B cell (primary cell): ENCODE measurements at regions of chr14 and their contacts with region 1.

Region 1: GRCh38 chr14:22448905-22449599 is 140.0 kb downstream of the DAD1 start:
- DNase-seq: no peak
- ATAC-seq: peak; percentile 16
- H3K4me3 ChIP-seq: no peak overlapping the region
- H3K4me3 Mint-ChIP-seq: no peak overlapping the region
- H3K27ac ChIP-seq: peak overlapping the region in 1 of 2 donors; percentile 47
- H3K27ac Mint-ChIP-seq: peak overlapping the region; percentile 88
- H3K4me1 ChIP-seq: peaks cover 15 to 17% of the 10 kb centered on the region in 2 donors
- H3K4me1 Mint-ChIP-seq: peaks cover 23% of the 10 kb centered on the region
- H3K27me3 ChIP-seq: no peaks in the 10 kb centered on the region
- H3K27me3 Mint-ChIP-seq: no peaks in the 10 kb centered on the region
- CTCF ChIP-seq: no peak

Region 2: DNA sequence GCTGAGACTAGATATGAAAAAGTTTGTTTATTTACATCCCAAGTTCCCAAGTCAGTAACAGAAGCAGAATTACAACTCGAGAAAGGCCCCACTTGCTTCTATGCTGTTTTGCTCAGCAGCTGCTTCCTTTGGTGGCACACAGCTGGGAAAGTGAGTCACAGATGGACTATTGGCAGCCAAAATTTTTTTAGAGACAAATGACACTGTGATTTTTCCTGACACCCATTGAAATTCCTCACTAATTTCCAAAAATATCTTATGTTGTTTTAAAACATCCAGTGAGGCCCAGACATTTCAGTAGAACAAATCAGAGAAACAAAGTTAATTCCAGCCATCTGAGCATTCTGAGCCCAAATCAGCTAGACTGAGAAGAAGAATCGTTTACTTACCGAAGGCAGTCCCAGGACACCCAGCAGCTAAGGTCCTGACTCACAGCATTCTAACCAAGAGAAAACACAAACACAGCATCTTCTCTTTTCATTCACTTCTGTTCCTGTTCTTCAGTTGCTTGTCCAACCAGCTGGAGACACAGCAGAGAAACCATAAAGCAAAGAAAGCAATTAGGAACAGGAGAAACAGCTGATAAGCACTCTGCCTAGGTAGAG is 48.3 kb before region 1 on chr14:
- CTCF ChIA-PET with region 1: no interaction called
- POLR2A ChIA-PET with region 1: no interaction called
- intact Hi-C with region 1: loop called (anchors 5 kb)
- DNase-seq: no peak
- ATAC-seq: no peak
- H3K4me3 ChIP-seq: no peak overlapping the region
- H3K4me3 Mint-ChIP-seq: no peak overlapping the region
- H3K27ac ChIP-seq: no peak overlapping the region
- H3K27ac Mint-ChIP-seq: no peak overlapping the region
- H3K4me1 ChIP-seq: peaks cover 7 to 9% of the 10 kb centered on the region in 2 donors
- H3K4me1 Mint-ChIP-seq: peaks cover 10% of the 10 kb centered on the region
- H3K27me3 ChIP-seq: no peaks in the 10 kb centered on the region
- H3K27me3 Mint-ChIP-seq: peaks cover 6% of the 10 kb centered on the region
- CTCF ChIP-seq: no peak

Region 3: GRCh38 chr14:22466491-22466890 is 17.4 kb after region 1 on chr14:
- CTCF ChIA-PET with region 1: interaction called, 9 read pairs
- POLR2A ChIA-PET with region 1: no interaction called
- intact Hi-C with region 1: loop called (anchors 2 kb)
- DNase-seq: no peak
- ATAC-seq: no peak
- H3K4me3 ChIP-seq: no peak overlapping the region
- H3K4me3 Mint-ChIP-seq: no peak overlapping the region
- H3K27ac ChIP-seq: no peak overlapping the region
- H3K27ac Mint-ChIP-seq: peak overlapping the region; percentile 16
- H3K4me1 ChIP-seq: peaks cover 30 to 48% of the 10 kb centered on the region in 2 donors
- H3K4me1 Mint-ChIP-seq: peaks cover 62% of the 10 kb centered on the region
- H3K27me3 ChIP-seq: no peaks in the 10 kb centered on the region
- H3K27me3 Mint-ChIP-seq: no peaks in the 10 kb centered on the region
- CTCF ChIP-seq: no peak